Dorsolateral prefrontal cortex (tissue), 120 donors: ENCODE measurements at regions of chr16 and their contacts with region 1.

Region 1: GRCh38 chr16:74874912-74875546 is 100.4 kb upstream of the FA2H start:
- DNase-seq: no peak
- H3K4me3 ChIP-seq: no peak overlapping the region
- H3K27ac ChIP-seq: no peak overlapping the region
- H3K27me3 ChIP-seq: no peaks in the 10 kb centered on the region
- CTCF ChIP-seq: no peak

Region 2: DNA sequence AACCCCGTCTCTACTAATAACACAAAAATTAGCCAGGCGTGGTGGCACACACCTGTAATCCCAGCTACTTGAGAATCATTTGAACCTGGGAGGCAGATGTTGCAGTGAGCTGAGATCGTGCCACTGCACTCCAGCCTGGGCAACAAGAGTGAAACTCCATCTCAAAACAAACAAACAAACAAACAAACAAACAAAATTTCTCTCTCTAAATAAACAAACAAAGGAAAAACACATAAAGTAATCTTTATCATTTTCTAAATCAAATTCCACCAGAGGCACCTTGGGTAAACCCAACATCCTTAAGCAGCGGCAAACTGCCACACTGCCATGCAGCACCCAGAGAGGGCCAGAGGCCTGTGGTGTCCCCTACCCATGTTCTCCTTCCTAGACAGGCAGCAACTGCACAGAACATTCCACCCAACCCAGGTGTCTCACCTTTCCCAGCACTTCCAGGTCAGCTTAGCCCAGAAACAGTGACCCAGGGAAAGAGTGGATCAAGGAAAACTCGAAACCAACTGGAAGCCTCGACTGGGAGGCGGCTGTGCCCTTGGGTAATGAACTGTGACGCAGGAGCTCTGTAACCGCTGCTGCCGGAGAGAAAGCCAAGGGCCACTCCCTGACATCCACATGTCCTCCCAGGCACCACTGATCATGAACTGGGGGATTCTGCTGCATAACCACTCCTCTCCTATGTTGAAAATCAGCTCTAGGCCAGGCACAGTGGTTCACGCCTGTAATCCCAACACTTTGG is 75.3 kb after region 1 on chr16:
- intact Hi-C with region 1: loop called in 1 of 2 experiments (anchors 10 kb)
- DNase-seq: no peak
- H3K4me3 ChIP-seq: no peak overlapping the region
- H3K27ac ChIP-seq: no peak overlapping the region
- H3K27me3 ChIP-seq: no peaks in the 10 kb centered on the region
- CTCF ChIP-seq: no peak